ENCODE measurements at regions of chr9 and their contacts with region 1.

Region 1: GRCh38 chr9:105244003-105244733 is at the start of gene SLC44A1:
- DNase-seq: peak; percentile 98
- H3K4me3 Mint-ChIP-seq: peak within 1 kb of the TSS; percentile 88
- H3K27ac Mint-ChIP-seq: peak within 1 kb of the TSS; percentile 74
- H3K4me1 Mint-ChIP-seq: peaks cover 22% of the 10 kb centered on the region
- H3K27me3 Mint-ChIP-seq: peaks cover 73% of the 10 kb centered on the region
- total RNA-seq, gene SLC44A1: 2.5 and 2.9 TPM in 2 replicates

Region 2: DNA sequence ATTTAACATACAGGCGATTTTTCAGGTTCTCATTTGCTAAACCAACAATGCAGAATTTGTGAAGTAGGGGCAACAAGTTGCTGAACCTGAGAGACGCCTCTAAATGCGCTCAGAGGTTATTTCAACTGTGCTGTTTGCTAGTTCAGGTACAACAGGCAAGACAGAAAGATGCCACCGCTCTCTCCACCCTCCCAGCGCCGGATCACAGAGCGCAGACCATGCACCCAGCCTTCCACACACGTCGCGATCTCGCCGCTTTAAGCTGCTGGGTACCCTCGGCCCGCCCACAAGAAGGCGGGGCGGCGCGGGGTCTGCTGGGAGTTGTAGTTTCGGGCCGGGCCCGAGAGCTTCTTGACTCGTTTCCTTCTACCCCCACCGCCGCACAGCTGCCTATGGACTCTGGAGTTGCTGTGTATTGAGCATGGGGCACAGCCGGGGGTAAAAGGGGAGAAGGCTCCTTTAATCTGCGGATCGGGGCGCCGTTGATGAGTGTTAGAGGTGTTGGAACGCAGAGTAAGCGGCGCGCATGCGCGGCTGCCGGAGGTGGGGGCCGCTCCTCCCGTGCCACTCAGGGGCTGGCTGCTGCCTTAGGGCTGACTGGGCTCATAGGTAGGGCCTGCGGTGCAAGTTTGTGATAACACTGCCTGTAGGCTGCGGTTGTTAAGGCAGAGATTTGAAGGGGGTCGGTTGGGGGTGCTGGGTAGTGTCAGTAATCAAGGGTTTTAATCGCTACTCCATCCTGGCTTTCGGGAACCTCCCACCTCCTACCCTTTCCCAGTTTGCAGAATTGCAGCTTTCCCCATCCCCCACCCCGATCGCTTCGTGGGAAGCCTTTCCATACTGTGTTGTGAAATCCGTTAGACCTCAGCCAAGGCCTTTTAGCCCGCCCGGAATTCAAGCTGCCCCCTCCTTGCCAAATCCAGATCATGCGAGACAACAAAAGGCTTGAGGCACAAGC is 275.9 kb before region 1 on chr9:
- intact Hi-C with region 1: loop called (anchors 10 kb)
- DNase-seq: peak; percentile 97
- H3K4me3 Mint-ChIP-seq: peak overlapping the region; percentile 96
- H3K27ac Mint-ChIP-seq: peak overlapping the region; percentile 72
- H3K4me1 Mint-ChIP-seq: peaks cover 8% of the 10 kb centered on the region
- H3K27me3 Mint-ChIP-seq: peaks cover 27% of the 10 kb centered on the region

Region 3: DNA sequence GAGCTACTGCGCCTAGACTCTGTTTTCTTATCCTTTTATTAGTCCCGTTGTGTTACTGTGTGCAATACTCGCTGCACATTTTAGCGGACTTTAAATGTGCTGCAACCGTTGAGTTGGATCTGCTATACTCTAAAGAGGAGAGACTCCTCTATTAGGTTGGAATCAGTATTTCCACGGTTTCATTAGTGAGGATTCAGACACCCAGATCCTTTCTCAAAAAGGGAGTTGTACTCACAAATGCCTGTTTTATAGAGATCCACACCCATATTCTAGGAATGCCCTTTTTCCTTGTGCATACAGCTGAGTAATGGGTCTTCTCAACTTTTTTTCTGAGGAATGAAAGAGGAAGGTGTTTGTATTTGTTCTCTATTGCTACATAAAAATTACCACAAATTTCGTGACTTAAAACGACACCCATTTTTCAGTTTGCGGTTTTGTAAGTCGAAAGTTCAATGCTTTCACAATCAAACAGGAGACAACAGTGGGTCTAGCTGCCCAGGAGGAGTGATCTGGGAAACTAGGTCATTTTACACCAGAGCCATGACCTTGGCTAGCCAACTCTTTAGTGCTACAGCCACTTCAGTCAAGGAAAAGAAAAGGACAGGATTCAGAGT is 52.6 kb before region 1 on chr9:
- intact Hi-C with region 1: no loop called
- DNase-seq: no peak
- H3K4me3 Mint-ChIP-seq: no peak overlapping the region
- H3K27ac Mint-ChIP-seq: no peak overlapping the region
- H3K4me1 Mint-ChIP-seq: no peaks in the 10 kb centered on the region
- H3K27me3 Mint-ChIP-seq: peaks cover 6% of the 10 kb centered on the region

Region 4: GRCh38 chr9:105405514-105406131 is 161.5 kb after region 1 on chr9:
- intact Hi-C with region 1: loop called (anchors 1 kb)
- DNase-seq: peak; percentile 90
- H3K4me3 Mint-ChIP-seq: peak overlapping the region; percentile 65
- H3K27ac Mint-ChIP-seq: peak overlapping the region; percentile 80
- H3K4me1 Mint-ChIP-seq: peaks cover 28% of the 10 kb centered on the region
- H3K27me3 Mint-ChIP-seq: peaks cover 73% of the 10 kb centered on the region

Region 5: GRCh38 chr9:105712773-105713172 is 468.6 kb after region 1 on chr9:
- intact Hi-C with region 1: no loop called
- DNase-seq: no peak
- H3K4me3 Mint-ChIP-seq: no peak overlapping the region
- H3K27ac Mint-ChIP-seq: no peak overlapping the region
- H3K4me1 Mint-ChIP-seq: peaks cover 6% of the 10 kb centered on the region
- H3K27me3 Mint-ChIP-seq: no peaks in the 10 kb centered on the region